ENCODE measurements at regions of chr10 and their contacts with region 1.

Region 1: GRCh38 chr10:12264204-12264940 is 68.4 kb downstream of the CDC123 start:
- DNase-seq: peak; percentile 84
- H3K4me3 ChIP-seq: peak overlapping the region; percentile 33
- H3K27ac ChIP-seq: peak overlapping the region; percentile 4
- H3K4me1 ChIP-seq: peaks cover 4% of the 10 kb centered on the region
- H3K27me3 ChIP-seq: no peaks in the 10 kb centered on the region
- CTCF ChIP-seq: peak; percentile 76

Region 2: GRCh38 chr10:12656518-12657142 is 392.3 kb after region 1 on chr10:
- intact Hi-C with region 1: loop called (anchors 2 kb)
- DNase-seq: no peak
- H3K4me3 ChIP-seq: no peak overlapping the region
- H3K27ac ChIP-seq: no peak overlapping the region
- H3K4me1 ChIP-seq: no peaks in the 10 kb centered on the region
- H3K27me3 ChIP-seq: no peaks in the 10 kb centered on the region
- CTCF ChIP-seq: peak; percentile 60

Region 3: DNA sequence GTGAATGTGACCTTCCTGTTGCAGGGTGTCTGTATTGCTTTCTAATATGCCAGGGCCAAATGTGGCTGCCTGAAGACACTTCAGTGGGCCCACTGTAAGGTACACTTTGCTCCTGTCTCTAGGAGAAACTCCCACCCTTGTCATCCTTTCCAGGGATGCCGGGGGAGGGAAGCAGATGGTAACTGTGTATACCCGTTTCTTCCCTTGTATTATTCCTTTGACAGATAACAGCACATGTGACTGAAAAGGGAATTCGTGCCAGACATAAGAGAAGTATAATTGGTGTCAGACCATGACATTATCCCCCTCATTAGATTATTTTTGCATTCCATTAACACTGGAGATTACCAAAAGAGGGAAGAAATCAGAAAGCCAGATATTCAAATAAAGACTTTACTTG is 402.7 kb after region 1 on chr10:
- intact Hi-C with region 1: no loop called
- DNase-seq: no peak
- H3K4me3 ChIP-seq: no peak overlapping the region
- H3K27ac ChIP-seq: no peak overlapping the region
- H3K4me1 ChIP-seq: no peaks in the 10 kb centered on the region
- H3K27me3 ChIP-seq: no peaks in the 10 kb centered on the region
- CTCF ChIP-seq: no peak

Region 4: GRCh38 chr10:12949248-12949647 is 684.9 kb after region 1 on chr10:
- intact Hi-C with region 1: no loop called
- DNase-seq: no peak
- H3K4me3 ChIP-seq: no peak overlapping the region
- H3K27ac ChIP-seq: no peak overlapping the region
- H3K4me1 ChIP-seq: no peaks in the 10 kb centered on the region
- H3K27me3 ChIP-seq: no peaks in the 10 kb centered on the region
- CTCF ChIP-seq: no peak